Activated CD8-positive, alpha-beta T cell treated with anti-CD3 and anti-CD28 coated beads for 36 hours (primary cell): ENCODE measurements at regions of chr11 and their contacts with region 1.

Region 1: GRCh38 chr11:43376594-43376993 is 17.9 kb downstream of the TTC17 start:
- DNase-seq: no peak
- ATAC-seq: no peak
- H3K4me3 Mint-ChIP-seq: no peak overlapping the region
- H3K27ac Mint-ChIP-seq: no peak overlapping the region
- H3K4me1 Mint-ChIP-seq: peaks cover 18% of the 10 kb centered on the region
- H3K27me3 Mint-ChIP-seq: no peaks in the 10 kb centered on the region
- CTCF ChIP-seq: no peak

Region 2: GRCh38 chr11:43393765-43394355 is 17.3 kb after region 1 on chr11:
- CTCF ChIA-PET with region 1: no interaction called
- POLR2A ChIA-PET with region 1: interaction called, 10 read pairs
- intact Hi-C with region 1: no loop called
- DNase-seq: no peak
- ATAC-seq: no peak
- H3K4me3 Mint-ChIP-seq: no peak overlapping the region
- H3K27ac Mint-ChIP-seq: peak overlapping the region; percentile 11
- H3K4me1 Mint-ChIP-seq: peaks cover 40% of the 10 kb centered on the region
- H3K27me3 Mint-ChIP-seq: no peaks in the 10 kb centered on the region
- CTCF ChIP-seq: no peak